PC-9 (cell line): ENCODE measurements at regions of chr4 and their contacts with region 1.

Region 1: DNA sequence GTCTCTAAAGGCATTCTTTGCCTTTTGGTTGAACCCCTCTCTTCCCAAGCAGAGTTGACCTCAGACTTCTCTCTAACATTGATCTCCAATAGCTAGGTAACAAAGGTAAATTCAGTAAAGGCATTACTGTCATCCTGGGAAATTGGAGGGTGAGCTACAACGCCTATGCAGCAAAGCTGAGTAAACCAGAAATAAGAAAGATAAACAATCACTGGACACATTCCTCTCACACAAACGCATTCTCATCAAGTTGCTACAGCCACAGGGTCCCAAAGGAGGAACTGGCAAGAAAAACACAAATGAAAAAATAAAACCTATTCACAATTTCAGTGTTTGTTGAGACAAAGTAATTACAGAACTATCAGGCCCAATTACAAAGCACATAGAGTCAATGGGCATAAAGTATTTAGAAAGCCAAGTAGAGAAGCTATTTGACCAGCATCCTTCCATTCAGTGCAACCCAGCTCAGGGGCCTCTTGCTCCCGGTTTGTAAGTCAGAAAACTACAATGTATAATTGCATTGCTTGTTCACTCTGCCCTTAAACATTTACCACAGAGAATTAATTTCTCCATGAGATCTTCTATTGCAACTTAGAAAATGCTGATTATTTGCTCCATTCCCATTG is 967.7 kb downstream of the PCDH7 start:
- DNase-seq: no peak
- H3K4me3 ChIP-seq: no peak overlapping the region
- H3K27ac ChIP-seq: no peak overlapping the region
- H3K4me1 ChIP-seq: no peaks in the 10 kb centered on the region
- H3K27me3 ChIP-seq: no peaks in the 10 kb centered on the region
- CTCF ChIP-seq: no peak

Region 2: DNA sequence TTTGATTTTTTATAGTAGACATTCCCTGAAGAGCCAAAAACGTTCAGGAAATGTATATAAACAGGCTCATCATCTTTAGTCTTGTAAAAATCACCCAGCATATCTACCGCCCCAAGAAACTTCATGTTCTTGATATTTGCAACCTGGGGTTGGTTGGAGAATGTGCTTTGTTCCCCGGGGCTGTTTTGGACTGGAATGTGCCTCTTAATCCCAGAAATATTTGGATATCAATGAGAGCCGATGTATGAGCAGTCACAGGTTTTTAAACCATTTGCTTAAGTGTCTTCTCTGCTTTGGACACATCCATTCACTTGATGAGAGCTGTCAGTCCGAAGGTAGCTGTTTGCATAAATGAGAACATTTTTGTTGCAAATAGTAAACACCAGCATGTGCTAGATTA is 518.0 kb before region 1 on chr4:
- CTCF ChIA-PET with region 1: no interaction called
- POLR2A ChIA-PET with region 1: no interaction called
- intact Hi-C with region 1: loop called (anchors 5 kb)
- DNase-seq: peak in 1 of 2 experiments; percentile 52
- H3K4me3 ChIP-seq: no peak overlapping the region
- H3K27ac ChIP-seq: no peak overlapping the region
- H3K4me1 ChIP-seq: no peaks in the 10 kb centered on the region; the same call in 1 of the 2 replicates
- H3K27me3 ChIP-seq: no peaks in the 10 kb centered on the region
- CTCF ChIP-seq: no peak

Region 3: GRCh38 chr4:31667686-31668085 is 20.1 kb before region 1 on chr4:
- CTCF ChIA-PET with region 1: no interaction called
- POLR2A ChIA-PET with region 1: no interaction called
- intact Hi-C with region 1: no loop called
- DNase-seq: no peak
- H3K4me3 ChIP-seq: no peak overlapping the region
- H3K27ac ChIP-seq: no peak overlapping the region
- H3K4me1 ChIP-seq: no peaks in the 10 kb centered on the region
- H3K27me3 ChIP-seq: no peaks in the 10 kb centered on the region
- CTCF ChIP-seq: no peak